ENCODE measurements at regions of chr1 and their contacts with region 1.

Region 1: GRCh38 chr1:100423832-100424337 is 71.6 kb downstream of the CDC14A start:
- DNase-seq: peak in 9 of 14 experiments; percentile 11 to 85 (median 33)
- ATAC-seq: peak; percentile 74
- H3K4me3 ChIP-seq: peak overlapping the region; percentile 51
- H3K4me3 Mint-ChIP-seq: peak overlapping the region; percentile 91
- H3K27ac ChIP-seq: peak overlapping the region; percentile 49 to 54
- H3K27ac Mint-ChIP-seq: peak overlapping the region; percentile 94
- H3K4me1 ChIP-seq: peaks cover 34% of the 10 kb centered on the region
- H3K4me1 Mint-ChIP-seq: peaks cover 84% of the 10 kb centered on the region
- H3K27me3 ChIP-seq: no peaks in the 10 kb centered on the region
- H3K27me3 Mint-ChIP-seq: no peaks in the 10 kb centered on the region
- CTCF ChIP-seq: peak; percentile 14

Region 2: DNA sequence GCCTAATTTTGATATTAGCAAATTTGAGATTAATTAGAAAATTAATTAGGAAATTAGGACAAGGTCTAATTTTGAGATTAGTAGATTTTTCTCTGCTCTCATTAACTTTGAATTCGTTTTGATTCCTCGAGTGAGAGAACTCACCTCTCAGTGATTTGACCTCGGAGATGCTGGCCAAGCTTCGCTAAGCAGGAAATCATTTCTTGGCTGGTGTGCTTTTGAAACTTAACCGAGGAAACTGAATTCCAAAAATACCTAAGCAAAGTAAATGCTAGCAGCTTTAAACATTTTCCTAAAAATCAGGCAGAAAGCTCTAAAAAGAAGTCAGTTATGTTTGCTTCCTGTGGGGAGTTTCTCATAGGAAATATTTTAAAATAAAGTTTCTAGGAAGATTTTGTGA is 36.7 kb before region 1 on chr1:
- CTCF ChIA-PET with region 1: interaction called, 9 read pairs
- POLR2A ChIA-PET with region 1: interaction called, 22 read pairs
- intact Hi-C with region 1: no loop called
- DNase-seq: peak in 2 of 14 experiments; percentile 32
- ATAC-seq: no peak
- H3K4me3 ChIP-seq: peak overlapping the region; percentile 35
- H3K4me3 Mint-ChIP-seq: peak overlapping the region; percentile 74
- H3K27ac ChIP-seq: peak overlapping the region in 1 of 2 donors; percentile 78
- H3K27ac Mint-ChIP-seq: peak overlapping the region; percentile 83
- H3K4me1 ChIP-seq: peaks cover 55% of the 10 kb centered on the region
- H3K4me1 Mint-ChIP-seq: peaks cover 94% of the 10 kb centered on the region
- H3K27me3 ChIP-seq: no peaks in the 10 kb centered on the region
- H3K27me3 Mint-ChIP-seq: no peaks in the 10 kb centered on the region
- CTCF ChIP-seq: no peak

Region 3: GRCh38 chr1:100452641-100453040 is 28.8 kb after region 1 on chr1:
- CTCF ChIA-PET with region 1: interaction called, 32 read pairs
- POLR2A ChIA-PET with region 1: interaction called, 28 read pairs
- intact Hi-C with region 1: loop called in 1 of 2 experiments (anchors 5 kb)
- DNase-seq: peak in 3 of 14 experiments; percentile 83 to 87 (median 86)
- ATAC-seq: peak; percentile 88
- H3K4me3 ChIP-seq: no peak overlapping the region
- H3K4me3 Mint-ChIP-seq: peak overlapping the region; percentile 70
- H3K27ac ChIP-seq: peak overlapping the region; percentile 77 to 90
- H3K27ac Mint-ChIP-seq: peak overlapping the region; percentile 94
- H3K4me1 ChIP-seq: peaks cover 51% of the 10 kb centered on the region
- H3K4me1 Mint-ChIP-seq: peaks cover 93% of the 10 kb centered on the region
- H3K27me3 ChIP-seq: no peaks in the 10 kb centered on the region
- H3K27me3 Mint-ChIP-seq: no peaks in the 10 kb centered on the region
- CTCF ChIP-seq: no peak